Dorsolateral prefrontal cortex (tissue), 120 donors: ENCODE measurements at regions of chr18 and their contacts with region 1.

Region 1: DNA sequence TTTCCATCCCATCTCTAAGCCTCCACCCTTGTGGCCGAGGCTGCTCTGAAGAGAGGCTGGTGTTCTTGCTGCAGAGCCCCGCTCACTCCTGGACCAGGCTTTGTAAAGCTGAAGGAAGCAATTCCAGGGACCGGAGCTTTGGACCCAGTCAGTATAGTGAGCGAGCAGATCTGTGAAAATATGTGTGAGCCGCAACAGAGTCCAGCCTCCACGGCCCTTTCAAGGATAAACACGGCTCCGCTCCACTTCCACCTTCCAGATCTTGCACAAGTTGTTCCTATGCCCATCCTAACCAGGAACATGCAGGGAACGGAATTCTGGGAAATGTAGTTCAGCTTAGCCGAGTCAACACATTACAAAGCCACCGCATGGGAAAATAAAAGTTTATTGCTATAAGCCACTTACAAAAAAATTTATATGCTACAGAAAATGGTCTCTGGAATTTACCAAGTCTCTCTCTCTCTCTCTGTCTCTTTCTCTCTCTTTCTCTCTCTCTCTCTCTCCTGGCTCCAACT is 151.7 kb upstream of the ZNF521 start:
- DNase-seq: peak; percentile 27 to 75 (median 52)
- H3K4me3 ChIP-seq: peak overlapping the region; percentile 21 to 74 (median 55)
- H3K27ac ChIP-seq: peak overlapping the region in 36 of 59 donors; percentile 9 to 80 (median 52)
- H3K27me3 ChIP-seq: no peaks in the 10 kb centered on the region
- CTCF ChIP-seq: peak in 4 of 56 donors; percentile 7 to 21 (median 15)

Region 2: GRCh38 chr18:25351777-25352628 is 151.6 kb before region 1 on chr18 and contains the start of gene ZNF521:
- intact Hi-C with region 1: loop called in 1 of 2 experiments (anchors 5 kb)
- DNase-seq: peak; percentile 72 to 90 (median 85)
- H3K4me3 ChIP-seq: peak within 1 kb of the TSS; percentile 54 to 89 (median 73)
- H3K27ac ChIP-seq: peak within 1 kb of the TSS; percentile 23 to 98 (median 91)
- H3K27me3 ChIP-seq: peaks cover 0 to 6% (median 0%) of the 10 kb centered on the region in 45 donors
- CTCF ChIP-seq: peak in 24 of 56 donors; percentile 11 to 40 (median 22)
- total RNA-seq, gene ZNF521: 12.9 to 41.3 (median 22.3) TPM

Region 3: DNA sequence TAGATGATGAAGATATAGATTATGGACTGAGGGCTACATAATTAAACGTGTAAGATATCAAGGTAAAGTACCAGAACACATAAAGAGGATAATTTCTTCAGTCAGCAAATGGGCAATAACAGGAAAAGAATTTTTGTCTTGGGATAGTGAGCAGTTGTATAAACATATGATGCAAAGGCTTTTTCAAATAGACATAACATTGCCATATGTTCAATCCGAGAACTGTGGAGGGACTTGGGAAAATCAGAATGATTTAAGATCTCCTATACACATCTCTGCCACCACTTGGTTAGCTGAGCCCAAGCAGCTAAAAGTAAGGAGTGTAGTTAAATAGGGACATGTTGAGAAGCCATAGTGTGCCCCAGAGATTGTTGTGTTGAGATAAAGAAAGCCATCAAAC is 136.0 kb after region 1 on chr18:
- intact Hi-C with region 1: no loop called
- DNase-seq: no peak
- H3K4me3 ChIP-seq: no peak overlapping the region
- H3K27ac ChIP-seq: no peak overlapping the region
- H3K27me3 ChIP-seq: peaks cover 0 to 11% (median 0%) of the 10 kb centered on the region in 45 donors
- CTCF ChIP-seq: no peak